ENCODE measurements at regions of chr17 and their contacts with region 1.

Region 1: DNA sequence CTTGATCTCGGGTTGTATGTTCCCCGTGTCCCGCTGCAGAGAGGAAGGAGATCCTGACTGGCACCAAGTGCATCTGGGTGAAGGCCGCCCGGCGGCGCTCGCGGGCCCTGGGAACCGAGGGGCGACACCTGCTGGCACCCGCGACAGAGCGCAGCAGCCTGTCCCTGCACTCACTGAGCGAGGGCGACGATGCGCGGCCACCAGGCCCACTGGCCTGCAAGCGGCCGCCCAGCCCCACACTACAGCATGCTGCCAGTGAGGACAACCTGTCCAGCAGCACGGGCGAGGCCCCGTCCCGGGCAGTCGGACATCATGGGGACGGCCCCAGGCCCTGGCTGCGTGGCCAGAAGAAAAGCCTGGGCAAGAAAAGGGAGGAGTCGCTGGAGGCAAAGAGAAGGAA is 7.5 kb downstream of the BTBD17 start:
- DNase-seq: peak; percentile 89
- H3K4me3 Mint-ChIP-seq: no peak overlapping the region
- H3K27ac Mint-ChIP-seq: no peak overlapping the region
- H3K4me1 Mint-ChIP-seq: peaks cover 9% of the 10 kb centered on the region
- H3K27me3 Mint-ChIP-seq: peaks cover 62% of the 10 kb centered on the region

Region 2: DNA sequence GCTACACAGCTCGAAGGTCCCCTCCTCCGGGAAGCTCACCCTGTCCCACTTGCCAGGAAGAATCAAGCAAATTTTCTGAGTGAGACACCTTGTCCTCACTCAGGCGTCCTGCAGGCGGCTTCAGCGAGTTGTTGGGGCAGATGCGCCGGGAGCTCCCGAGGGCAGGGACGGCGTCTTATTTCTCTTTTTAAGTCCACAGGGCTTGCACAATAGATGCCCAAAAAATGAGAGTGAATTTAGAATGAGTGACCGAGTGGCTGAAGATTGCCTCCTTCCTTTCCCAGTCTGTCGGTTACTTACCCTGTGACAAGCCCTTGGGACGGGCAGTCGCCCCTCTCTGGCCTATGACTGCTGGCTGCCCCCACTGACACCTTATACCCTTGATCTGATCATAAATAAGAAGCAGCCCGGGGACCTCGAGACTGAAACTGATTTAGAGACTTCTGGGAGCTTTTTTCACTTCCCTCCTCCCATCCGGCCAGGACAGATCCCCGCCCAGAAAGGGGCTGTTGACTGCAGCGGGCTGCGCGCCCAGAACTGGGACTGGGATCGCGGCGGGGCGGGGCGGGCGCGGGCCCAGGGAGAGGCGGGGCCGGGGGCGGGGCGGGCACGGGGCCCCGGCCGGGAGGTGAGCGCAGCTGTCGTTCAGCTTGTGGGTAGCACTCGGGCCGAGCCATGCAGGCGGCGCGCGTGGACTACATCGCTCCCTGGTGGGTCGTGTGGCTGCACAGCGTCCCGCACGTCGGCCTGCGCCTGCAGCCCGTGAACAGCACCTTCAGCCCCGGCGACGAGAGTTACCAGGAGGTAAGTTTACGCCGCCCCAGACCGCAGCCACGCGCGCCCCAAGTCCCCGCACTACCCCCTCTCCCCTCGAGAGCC is 141.0 kb before region 1 on chr17 and contains the start of gene TTYH2:
- intact Hi-C with region 1: loop called (anchors 1 kb)
- DNase-seq: peak; percentile 93
- H3K4me3 Mint-ChIP-seq: peak within 1 kb of the TSS; percentile 82
- H3K27ac Mint-ChIP-seq: peak within 1 kb of the TSS; percentile 72
- H3K4me1 Mint-ChIP-seq: peaks cover 47% of the 10 kb centered on the region
- H3K27me3 Mint-ChIP-seq: no peaks in the 10 kb centered on the region
- total RNA-seq, gene TTYH2: 7.8 and 8.1 TPM in 2 replicates

Region 3: DNA sequence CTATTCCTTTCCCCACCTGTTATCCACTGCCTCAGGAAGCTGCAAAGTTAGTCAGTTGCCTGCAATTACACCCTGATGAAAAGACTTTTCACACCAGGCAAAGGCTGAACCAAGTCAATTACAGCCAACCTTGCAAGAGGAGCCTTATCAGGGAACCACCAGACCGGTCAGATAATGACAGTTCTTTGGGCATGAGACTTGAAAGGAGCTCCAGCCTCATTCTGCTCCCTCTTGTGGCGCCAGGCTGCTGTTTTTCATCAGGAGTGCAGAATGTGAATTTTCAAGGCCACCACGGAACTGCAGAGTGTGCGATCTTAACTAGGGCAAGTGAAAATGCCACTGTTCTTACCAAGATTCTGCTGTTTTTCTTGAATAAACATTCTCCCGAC is 57.6 kb before region 1 on chr17:
- intact Hi-C with region 1: loop called (anchors 1 kb)
- DNase-seq: peak; percentile 82
- H3K4me3 Mint-ChIP-seq: no peak overlapping the region
- H3K27ac Mint-ChIP-seq: peak overlapping the region; percentile 41
- H3K4me1 Mint-ChIP-seq: peaks cover 18% of the 10 kb centered on the region
- H3K27me3 Mint-ChIP-seq: peaks cover 6% of the 10 kb centered on the region

Region 4: GRCh38 chr17:74305865-74306654 is 48.1 kb before region 1 on chr17:
- intact Hi-C with region 1: loop called (anchors 1 kb)
- DNase-seq: no peak
- H3K4me3 Mint-ChIP-seq: no peak overlapping the region
- H3K27ac Mint-ChIP-seq: no peak overlapping the region
- H3K4me1 Mint-ChIP-seq: peaks cover 16% of the 10 kb centered on the region
- H3K27me3 Mint-ChIP-seq: peaks cover 7% of the 10 kb centered on the region